ENCODE measurements at regions of chr6 and their contacts with region 1.

Region 1: DNA sequence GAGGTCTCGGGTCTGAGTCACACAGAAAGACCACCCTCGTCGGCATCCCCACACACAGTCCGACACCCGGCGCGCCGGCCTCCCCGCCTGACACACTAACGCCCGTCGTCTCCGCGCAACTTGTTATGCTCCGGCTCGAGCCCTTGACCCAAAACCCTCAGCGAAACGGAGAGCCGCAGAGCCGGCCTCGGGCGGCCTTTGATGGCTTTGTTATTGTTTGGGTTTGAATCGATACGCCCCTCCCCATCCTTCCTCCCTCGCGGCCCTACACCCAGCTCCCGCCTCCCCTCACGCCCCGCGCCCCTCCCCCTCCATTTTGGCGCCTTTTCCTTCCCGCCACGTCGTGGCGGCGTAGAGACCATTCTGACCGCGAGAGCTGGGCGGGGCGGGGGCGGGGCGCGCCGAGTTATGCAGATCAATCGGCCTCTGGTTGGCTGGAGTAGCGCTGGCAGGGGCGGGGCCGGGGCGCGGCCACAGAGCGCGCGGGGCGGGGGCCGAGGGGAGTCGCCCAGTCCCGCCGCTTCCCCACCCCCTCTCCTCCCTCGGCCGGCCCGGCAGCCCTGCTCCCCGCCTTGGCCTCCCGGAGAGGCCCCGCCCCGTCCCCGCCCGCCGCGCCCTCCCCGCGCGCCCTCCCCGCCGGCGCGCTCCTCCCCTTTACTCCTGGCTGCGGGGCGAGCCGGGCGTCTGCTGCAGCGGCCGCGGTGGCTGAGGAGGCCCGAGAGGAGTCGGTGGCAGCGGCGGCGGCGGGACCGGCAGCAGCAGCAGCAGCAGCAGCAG is at the start of gene PIM1:
- DNase-seq: peak; percentile 90 to 95
- H3K4me3 ChIP-seq: peak within 1 kb of the TSS; percentile 64
- H3K27ac ChIP-seq: peak within 1 kb of the TSS; percentile 97
- H3K4me1 ChIP-seq: peaks cover 42% of the 10 kb centered on the region
- H3K27me3 ChIP-seq: no peaks in the 10 kb centered on the region
- CTCF ChIP-seq: no peak
- total RNA-seq, gene PIM1: 51.0 and 60.3 TPM in 2 replicates

Region 2: DNA sequence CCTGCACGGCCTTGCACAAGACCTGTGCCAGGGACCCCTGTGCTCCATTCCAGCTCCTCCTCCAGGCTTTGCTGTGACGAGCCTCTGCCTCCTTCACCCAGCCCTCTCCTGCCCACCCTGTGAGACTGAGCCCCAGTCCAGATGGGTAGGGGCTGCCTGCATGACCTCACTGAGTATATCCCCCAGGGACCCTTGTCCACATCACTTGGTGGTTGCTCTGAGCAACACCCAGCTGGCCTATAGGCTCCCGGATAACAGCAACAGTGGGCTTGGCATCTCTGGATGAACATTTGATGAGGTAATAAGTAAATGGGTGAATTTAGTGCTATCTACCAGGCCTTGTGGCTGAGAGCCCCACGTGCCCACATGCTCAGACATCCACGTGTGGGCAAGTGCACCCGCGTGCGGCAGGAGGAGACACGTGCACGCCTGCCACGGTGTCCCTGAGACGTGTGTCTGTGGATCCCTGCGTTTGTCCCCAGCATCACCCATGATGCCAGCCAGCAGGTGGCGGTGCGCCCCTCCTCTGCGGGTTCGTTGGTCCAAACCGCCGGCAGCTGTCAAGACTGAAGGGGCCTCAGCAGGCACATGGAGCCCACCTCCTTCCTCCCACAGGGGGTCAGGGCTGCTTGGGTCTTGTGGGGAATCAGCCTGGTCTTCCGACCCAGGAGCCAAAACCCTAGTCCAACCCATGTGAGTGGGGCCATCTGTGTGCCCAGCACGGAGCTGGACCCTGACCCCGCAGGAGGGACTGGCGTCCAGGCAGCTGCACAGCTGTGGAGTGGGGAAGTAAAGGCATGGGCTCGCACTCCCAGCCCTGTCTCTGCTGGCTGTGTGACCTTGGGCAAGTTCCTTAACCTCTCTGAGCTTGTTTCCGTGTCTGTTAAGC is 118.3 kb before region 1 on chr6:
- CTCF ChIA-PET with region 1: interaction called, 6 read pairs
- POLR2A ChIA-PET with region 1: interaction called, 3 read pairs
- intact Hi-C with region 1: loop called (anchors 1 kb)
- DNase-seq: peak; percentile 52 to 82
- H3K4me3 ChIP-seq: no peak overlapping the region
- H3K27ac ChIP-seq: no peak overlapping the region
- H3K4me1 ChIP-seq: peaks cover 48% of the 10 kb centered on the region
- H3K27me3 ChIP-seq: no peaks in the 10 kb centered on the region
- CTCF ChIP-seq: peak; percentile 89

Region 3: GRCh38 chr6:37092923-37093920 is 76.5 kb before region 1 on chr6:
- CTCF ChIA-PET with region 1: no interaction called
- POLR2A ChIA-PET with region 1: no interaction called
- intact Hi-C with region 1: loop called (anchors 1 kb)
- DNase-seq: peak; percentile 95 to 99
- H3K4me3 ChIP-seq: peak overlapping the region; percentile 15; the same call in 1 of the 2 replicates
- H3K27ac ChIP-seq: peak overlapping the region; percentile 93
- H3K4me1 ChIP-seq: peaks cover 50% of the 10 kb centered on the region
- H3K27me3 ChIP-seq: no peaks in the 10 kb centered on the region
- CTCF ChIP-seq: no peak

Region 4: GRCh38 chr6:37137201-37138090 is 32.2 kb before region 1 on chr6:
- CTCF ChIA-PET with region 1: interaction called, 3 read pairs
- POLR2A ChIA-PET with region 1: interaction called, 8 read pairs
- intact Hi-C with region 1: loop called (anchors 1 kb)
- DNase-seq: peak; percentile 81 to 98
- H3K4me3 ChIP-seq: peak overlapping the region; percentile 56
- H3K27ac ChIP-seq: peak overlapping the region; percentile 98
- H3K4me1 ChIP-seq: peaks cover 88% of the 10 kb centered on the region
- H3K27me3 ChIP-seq: no peaks in the 10 kb centered on the region
- CTCF ChIP-seq: no peak

Region 5: DNA sequence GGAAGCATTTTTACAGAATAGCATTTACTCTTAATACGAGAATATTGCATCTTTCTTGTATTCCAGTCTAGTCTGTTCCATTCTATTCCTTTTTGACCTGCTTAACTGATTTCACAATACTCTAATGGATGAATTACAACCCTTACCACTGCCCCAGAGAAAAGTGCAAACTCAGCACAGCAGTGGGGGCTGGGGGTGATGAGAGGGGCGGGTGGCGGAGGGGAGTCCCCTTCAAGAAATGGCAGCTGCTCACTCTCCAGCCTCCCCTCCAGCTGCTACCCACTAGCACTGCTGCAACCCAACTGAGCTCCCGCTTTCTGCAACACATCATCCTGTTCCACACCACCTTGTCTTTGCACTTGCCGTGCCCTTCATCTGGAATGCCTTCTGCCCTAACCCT is 30.4 kb after region 1 on chr6:
- CTCF ChIA-PET with region 1: interaction called, 10 read pairs
- POLR2A ChIA-PET with region 1: interaction called, 5 read pairs
- intact Hi-C with region 1: no loop called
- DNase-seq: no peak
- H3K4me3 ChIP-seq: no peak overlapping the region
- H3K27ac ChIP-seq: no peak overlapping the region
- H3K4me1 ChIP-seq: peaks cover 37% of the 10 kb centered on the region
- H3K27me3 ChIP-seq: no peaks in the 10 kb centered on the region
- CTCF ChIP-seq: no peak

Measured in PC-9 (cell line).